BJ (cell line): ENCODE measurements at regions of chr14 and their contacts with region 1.

Region 1: DNA sequence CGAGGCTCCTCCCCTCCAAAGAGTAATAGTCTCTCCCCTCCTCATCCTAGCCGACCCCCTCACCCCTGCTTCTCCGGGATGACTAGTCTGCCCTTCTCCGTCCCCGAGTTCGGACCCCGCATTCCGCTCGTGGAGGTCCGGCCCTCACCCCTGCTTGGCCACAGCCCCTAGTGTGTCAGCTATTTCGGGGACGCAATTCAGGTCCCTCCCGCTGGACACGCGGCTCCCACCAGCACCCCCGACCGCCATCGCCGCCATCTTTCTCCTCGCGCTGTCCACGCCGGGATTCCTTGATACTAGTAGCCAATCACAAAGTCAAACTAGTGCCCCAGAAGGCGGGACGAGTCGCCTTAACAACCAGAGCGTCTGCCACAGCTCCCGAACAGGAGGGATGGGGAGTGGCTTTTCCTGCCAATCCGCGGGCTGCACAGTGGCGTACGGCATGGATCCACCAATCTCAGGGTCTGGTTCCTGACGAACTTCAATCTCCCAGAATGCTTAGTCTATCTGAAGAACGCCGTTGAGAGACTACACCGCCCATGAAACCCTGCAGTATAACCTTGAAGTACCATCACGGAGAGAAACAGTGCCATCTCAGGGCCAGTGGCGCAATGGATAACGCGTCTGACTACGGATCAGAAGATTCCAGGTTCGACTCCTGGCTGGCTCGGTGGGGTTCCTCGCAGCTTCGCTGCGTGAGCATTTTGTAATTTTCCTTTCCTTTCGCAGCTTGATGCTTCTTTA is at the start of gene PRMT5:
- DNase-seq: peak; percentile 100
- H3K4me3 ChIP-seq: peak within 1 kb of the TSS; percentile 86
- H3K27me3 ChIP-seq: no peaks in the 10 kb centered on the region
- CTCF ChIP-seq: no peak
- polyA plus RNA-seq, gene PRMT5: 128 and 152 TPM in 2 replicates

Region 2: DNA sequence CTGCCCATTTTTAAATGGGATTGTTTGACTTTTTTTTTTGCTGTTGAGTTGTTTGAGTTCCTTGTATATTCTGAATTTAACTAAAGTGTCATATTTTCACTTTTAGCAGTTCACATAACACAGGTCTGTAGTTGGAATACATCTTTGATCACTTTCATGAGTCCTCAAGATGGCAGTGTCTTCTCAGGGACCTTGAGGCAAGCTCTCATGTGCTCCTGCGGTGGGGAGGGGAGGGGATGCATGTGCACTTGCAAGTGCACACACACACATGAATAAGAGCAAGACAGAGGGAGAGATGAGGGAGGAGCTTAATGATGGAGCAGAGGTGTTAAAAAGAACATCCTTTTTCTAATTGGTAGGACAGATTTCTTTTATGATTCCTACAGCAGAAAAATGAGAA is 964.2 kb before region 1 on chr14:
- CTCF ChIA-PET with region 1: no interaction called
- POLR2A ChIA-PET with region 1: no interaction called
- DNase-seq: no peak
- H3K4me3 ChIP-seq: no peak overlapping the region
- H3K27me3 ChIP-seq: no peaks in the 10 kb centered on the region
- CTCF ChIP-seq: no peak

Region 3: GRCh38 chr14:22791301-22791700 is 138.0 kb before region 1 on chr14:
- CTCF ChIA-PET with region 1: no interaction called
- POLR2A ChIA-PET with region 1: no interaction called
- DNase-seq: peak; percentile 41
- H3K4me3 ChIP-seq: no peak overlapping the region
- H3K27me3 ChIP-seq: no peaks in the 10 kb centered on the region; the same call in 1 of the 2 replicates
- CTCF ChIP-seq: no peak

Region 4: DNA sequence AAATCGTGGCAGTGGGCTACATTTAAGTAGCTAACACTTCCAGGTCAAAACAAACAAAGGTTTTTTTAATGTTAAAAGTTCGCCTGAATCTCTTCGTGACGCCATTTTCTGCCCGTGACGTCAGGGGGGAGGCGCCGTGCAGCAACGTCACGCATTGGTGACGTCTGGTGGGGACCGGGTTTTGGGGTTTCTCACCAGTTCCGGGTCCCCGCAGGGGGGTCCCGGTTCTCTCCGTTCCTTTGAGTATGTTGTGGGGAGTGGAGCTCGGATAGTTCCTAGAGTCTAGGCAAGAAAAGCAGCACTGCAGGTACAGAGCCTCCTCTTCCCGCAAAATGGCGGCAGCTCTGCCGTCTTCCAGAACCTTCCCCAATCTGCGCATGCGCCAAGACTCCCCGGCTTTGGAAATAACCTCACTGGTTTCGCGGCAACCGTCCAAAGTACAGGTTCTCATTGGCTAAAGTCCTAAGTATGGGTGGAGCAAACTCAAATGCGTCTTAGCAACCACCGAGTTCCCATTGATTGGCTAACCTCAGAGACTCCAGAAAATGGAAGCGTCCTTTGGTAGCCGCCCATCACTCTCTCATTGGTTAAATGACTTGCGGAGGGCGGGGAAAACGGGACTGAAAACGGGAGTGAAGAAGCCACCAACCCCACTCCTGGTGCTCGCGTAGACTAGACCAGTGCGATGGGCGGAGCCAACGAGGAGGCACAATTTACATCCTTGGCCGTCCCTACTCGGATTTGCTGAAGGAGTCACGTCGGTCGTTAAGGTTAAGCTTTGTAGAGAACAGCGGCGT is 10.3 kb before region 1 on chr14 and contains the start of gene RBM23:
- CTCF ChIA-PET with region 1: interaction called, 17 read pairs
- POLR2A ChIA-PET with region 1: interaction called, 3 read pairs
- DNase-seq: peak; percentile 100
- H3K4me3 ChIP-seq: peak within 1 kb of the TSS; percentile 74
- H3K27me3 ChIP-seq: no peaks in the 10 kb centered on the region
- CTCF ChIP-seq: no peak
- polyA plus RNA-seq, gene RBM23: 54.1 and 60.9 TPM in 2 replicates

Region 5: DNA sequence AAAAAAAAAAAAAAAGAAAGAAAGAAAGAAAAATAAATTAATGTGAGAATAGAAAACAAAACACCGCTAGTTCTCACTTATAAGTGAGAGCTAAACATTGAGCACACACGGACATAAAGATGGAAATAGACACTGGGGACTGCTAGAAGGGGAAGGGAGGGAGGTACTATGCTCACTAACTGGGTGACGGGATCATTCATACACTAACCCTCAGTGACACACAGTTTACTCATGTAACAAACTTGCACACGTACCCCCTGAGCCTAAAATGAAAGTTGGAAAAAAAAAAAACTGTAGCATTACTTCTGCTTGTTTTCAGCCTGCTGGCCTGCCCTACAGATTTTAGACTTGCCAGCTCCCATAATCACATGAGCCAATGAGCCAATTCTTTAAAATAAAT is 10.4 kb after region 1 on chr14:
- CTCF ChIA-PET with region 1: interaction called, 21 read pairs
- POLR2A ChIA-PET with region 1: interaction called, 4 read pairs
- DNase-seq: no peak
- H3K4me3 ChIP-seq: no peak overlapping the region
- H3K27me3 ChIP-seq: no peaks in the 10 kb centered on the region
- CTCF ChIP-seq: no peak

Region 6: DNA sequence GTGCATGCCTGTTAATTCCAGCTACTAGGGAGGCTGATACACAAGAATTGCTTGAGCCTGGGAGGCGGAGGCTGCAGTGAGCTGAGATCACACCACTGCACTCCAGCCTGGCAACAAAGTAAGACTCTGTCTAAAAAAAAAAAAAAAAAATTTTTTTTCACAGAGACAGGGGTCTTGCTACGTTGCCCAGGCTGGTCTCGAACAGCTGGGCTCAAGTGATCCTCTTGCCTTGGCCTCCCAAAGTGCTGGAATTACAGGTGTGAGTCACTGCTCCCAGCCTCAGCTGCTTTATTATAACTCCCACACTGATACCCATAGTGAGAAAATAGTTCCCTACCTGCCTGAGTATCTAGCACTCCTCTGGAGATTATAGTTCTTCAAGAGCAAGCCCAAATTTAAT is 16.4 kb after region 1 on chr14:
- CTCF ChIA-PET with region 1: interaction called, 21 read pairs
- POLR2A ChIA-PET with region 1: interaction called, 4 read pairs
- DNase-seq: no peak
- H3K4me3 ChIP-seq: no peak overlapping the region
- H3K27me3 ChIP-seq: no peaks in the 10 kb centered on the region
- CTCF ChIP-seq: no peak

Region 7: GRCh38 chr14:22955702-22956569 is 26.7 kb after region 1 on chr14:
- CTCF ChIA-PET with region 1: interaction called, 25 read pairs
- POLR2A ChIA-PET with region 1: interaction called, 16 read pairs
- DNase-seq: no peak
- H3K4me3 ChIP-seq: peak overlapping the region; percentile 53
- H3K27me3 ChIP-seq: no peaks in the 10 kb centered on the region; the same call in 1 of the 2 replicates
- CTCF ChIP-seq: no peak

Region 8: GRCh38 chr14:22973217-22974032 is 44.1 kb after region 1 on chr14:
- CTCF ChIA-PET with region 1: interaction called, 20 read pairs
- POLR2A ChIA-PET with region 1: no interaction called
- DNase-seq: no peak
- H3K4me3 ChIP-seq: no peak overlapping the region
- H3K27me3 ChIP-seq: no peaks in the 10 kb centered on the region
- CTCF ChIP-seq: peak; percentile 65